Left ventricle myocardium inferior (tissue), 1 donor: ENCODE measurements at regions of chr3 and their contacts with region 1.

Region 1: DNA sequence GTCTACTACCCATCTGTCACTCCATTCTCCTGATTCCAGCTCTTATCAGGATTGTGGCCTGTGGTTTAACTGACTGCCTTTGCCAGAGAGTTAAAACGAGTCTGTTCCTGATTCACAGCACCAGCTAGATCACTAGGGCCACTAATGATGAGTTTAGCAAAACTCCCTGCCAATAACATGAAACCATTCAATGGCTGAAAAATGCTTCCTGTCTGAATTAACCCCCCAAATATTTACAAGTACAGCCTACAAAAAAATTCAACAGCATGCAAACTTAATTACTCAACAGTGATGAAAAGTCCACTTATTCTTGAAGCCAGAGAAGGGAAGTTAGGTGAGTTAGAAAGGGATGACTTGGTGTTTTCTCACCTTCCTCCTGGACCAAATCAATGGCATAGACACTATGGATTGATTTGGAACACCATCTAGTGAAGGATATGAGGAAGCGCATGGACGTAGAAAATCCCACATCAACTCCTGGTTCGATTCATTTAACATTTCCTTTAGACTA is 141.4 kb downstream of the TGFBR2 start:
- DNase-seq: no peak
- H3K4me3 ChIP-seq: no peak overlapping the region
- H3K27ac ChIP-seq: no peak overlapping the region
- H3K4me1 ChIP-seq: peaks cover 4% of the 10 kb centered on the region
- H3K27me3 ChIP-seq: no peaks in the 10 kb centered on the region
- CTCF ChIP-seq: peak; percentile 75

Region 2: GRCh38 chr3:30042274-30042859 is 705.5 kb before region 1 on chr3:
- intact Hi-C with region 1: loop called (anchors 5 kb)
- DNase-seq: peak; percentile 22
- H3K4me3 ChIP-seq: no peak overlapping the region
- H3K27ac ChIP-seq: no peak overlapping the region
- H3K4me1 ChIP-seq: no peaks in the 10 kb centered on the region
- H3K27me3 ChIP-seq: no peaks in the 10 kb centered on the region
- CTCF ChIP-seq: peak; percentile 87

Region 3: DNA sequence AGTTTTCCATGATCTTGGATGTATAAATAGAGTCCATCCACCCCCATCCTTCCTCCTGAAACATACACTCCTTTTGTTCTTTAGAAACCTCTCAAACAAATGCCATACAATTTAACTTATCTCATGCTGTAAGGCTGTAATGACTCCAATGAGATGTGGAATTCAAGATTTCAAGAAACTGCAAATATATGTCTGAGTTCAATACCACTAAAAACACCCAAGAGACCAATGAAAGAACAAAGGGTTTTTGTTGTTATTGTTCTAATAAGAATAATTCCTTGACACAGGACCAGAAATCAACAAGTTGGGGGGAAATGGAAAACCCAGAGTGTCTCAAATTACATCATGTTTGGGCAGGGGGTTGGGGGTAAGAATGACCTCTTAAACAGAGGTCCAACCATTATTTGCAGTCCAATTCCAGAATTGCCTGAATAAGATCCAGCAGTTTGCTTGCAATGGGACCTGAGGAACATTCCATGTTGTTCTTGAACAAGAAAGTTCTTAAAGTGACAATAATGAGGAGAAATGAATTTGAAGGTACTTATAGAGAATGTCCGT is 190.0 kb before region 1 on chr3:
- intact Hi-C with region 1: no loop called
- DNase-seq: no peak
- H3K4me3 ChIP-seq: no peak overlapping the region
- H3K27ac ChIP-seq: no peak overlapping the region
- H3K4me1 ChIP-seq: no peaks in the 10 kb centered on the region
- H3K27me3 ChIP-seq: no peaks in the 10 kb centered on the region
- CTCF ChIP-seq: no peak

Region 4: DNA sequence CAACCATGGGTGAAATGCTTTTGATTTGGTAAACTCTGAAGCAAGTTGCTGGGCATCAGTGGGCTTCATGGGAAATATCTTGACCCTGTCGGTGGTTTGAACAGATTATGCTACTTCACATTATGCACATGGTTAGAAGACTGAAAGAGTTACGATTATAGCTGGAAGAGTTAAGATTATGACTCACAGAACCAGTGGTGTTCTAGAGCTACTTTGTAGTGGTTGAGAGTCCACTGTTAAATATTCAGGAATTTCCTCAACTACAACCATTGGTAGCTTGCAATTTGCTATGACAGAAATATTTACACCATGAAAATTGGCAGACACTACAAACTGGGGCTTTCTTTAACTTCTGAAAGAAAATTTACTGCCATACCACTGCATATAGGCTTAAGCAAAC is 47.4 kb after region 1 on chr3:
- intact Hi-C with region 1: no loop called
- DNase-seq: no peak
- H3K4me3 ChIP-seq: no peak overlapping the region
- H3K27ac ChIP-seq: no peak overlapping the region
- H3K4me1 ChIP-seq: no peaks in the 10 kb centered on the region
- H3K27me3 ChIP-seq: no peaks in the 10 kb centered on the region
- CTCF ChIP-seq: no peak